ENCODE measurements at regions of chr4 and their contacts with region 1.

Region 1: GRCh38 chr4:87330761-87331160 is 8.1 kb upstream of the HSD17B13 start:
- DNase-seq: no peak
- ATAC-seq: no peak
- H3K4me3 Mint-ChIP-seq: no peak overlapping the region
- H3K27ac Mint-ChIP-seq: no peak overlapping the region
- H3K4me1 Mint-ChIP-seq: no peaks in the 10 kb centered on the region
- H3K27me3 Mint-ChIP-seq: no peaks in the 10 kb centered on the region; the same call in 1 of the 2 replicates
- CTCF ChIP-seq: no peak

Region 2: GRCh38 chr4:87304671-87305432 is 25.9 kb before region 1 on chr4:
- CTCF ChIA-PET with region 1: no interaction called
- POLR2A ChIA-PET with region 1: no interaction called
- DNase-seq: no peak
- ATAC-seq: no peak
- H3K4me3 Mint-ChIP-seq: no peak overlapping the region
- H3K27ac Mint-ChIP-seq: no peak overlapping the region
- H3K4me1 Mint-ChIP-seq: no peaks in the 10 kb centered on the region
- H3K27me3 Mint-ChIP-seq: no peaks in the 10 kb centered on the region
- CTCF ChIP-seq: no peak

Region 3: GRCh38 chr4:87317543-87317942 is 13.2 kb before region 1 on chr4:
- CTCF ChIA-PET with region 1: interaction called, 3 read pairs
- POLR2A ChIA-PET with region 1: interaction called, 11 read pairs
- DNase-seq: no peak
- ATAC-seq: no peak
- H3K4me3 Mint-ChIP-seq: no peak overlapping the region
- H3K27ac Mint-ChIP-seq: no peak overlapping the region
- H3K4me1 Mint-ChIP-seq: 0 out of 2 replicates have a peak, but pooled peaks cover 2% of the 10 kb centered on the region
- H3K27me3 Mint-ChIP-seq: no peaks in the 10 kb centered on the region
- CTCF ChIP-seq: no peak

Region 4: DNA sequence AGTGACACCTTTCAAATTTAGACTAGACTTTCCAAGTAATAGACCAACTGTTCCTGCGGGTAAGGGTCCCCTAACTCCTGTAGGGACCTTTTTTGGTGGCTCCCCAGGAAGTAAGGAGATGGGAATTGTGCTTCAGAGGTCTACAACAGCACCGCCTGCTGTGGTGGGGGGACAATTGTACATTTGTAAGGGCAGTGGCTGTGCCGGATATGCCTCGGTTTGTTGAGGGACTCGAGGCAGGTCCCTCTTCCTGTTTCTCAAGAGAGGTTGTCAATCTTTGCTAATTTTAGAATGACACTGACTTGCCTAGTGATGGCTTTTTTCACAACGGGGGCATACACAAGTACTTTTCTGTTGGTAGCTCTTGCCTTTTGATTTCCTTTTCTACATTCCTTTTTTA is 75.7 kb after region 1 on chr4:
- CTCF ChIA-PET with region 1: no interaction called
- POLR2A ChIA-PET with region 1: no interaction called
- DNase-seq: no peak
- ATAC-seq: no peak
- H3K4me3 Mint-ChIP-seq: no peak overlapping the region
- H3K27ac Mint-ChIP-seq: no peak overlapping the region
- H3K4me1 Mint-ChIP-seq: peaks cover 22% of the 10 kb centered on the region
- H3K27me3 Mint-ChIP-seq: no peaks in the 10 kb centered on the region
- CTCF ChIP-seq: no peak

Measured in WTC11 (cell line).